ENCODE measurements at regions of chr22 and their contacts with region 1.

Region 1: GRCh38 chr22:42437488-42438292 is 5.5 kb upstream of the NFAM1 start:
- DNase-seq: peak; percentile 85
- H3K4me3 Mint-ChIP-seq: peak overlapping the region; percentile 72
- H3K27ac Mint-ChIP-seq: no peak overlapping the region
- H3K4me1 Mint-ChIP-seq: peaks cover 23% of the 10 kb centered on the region
- H3K27me3 Mint-ChIP-seq: peaks cover 19% of the 10 kb centered on the region
- CTCF ChIP-seq: peak; percentile 99

Region 2: DNA sequence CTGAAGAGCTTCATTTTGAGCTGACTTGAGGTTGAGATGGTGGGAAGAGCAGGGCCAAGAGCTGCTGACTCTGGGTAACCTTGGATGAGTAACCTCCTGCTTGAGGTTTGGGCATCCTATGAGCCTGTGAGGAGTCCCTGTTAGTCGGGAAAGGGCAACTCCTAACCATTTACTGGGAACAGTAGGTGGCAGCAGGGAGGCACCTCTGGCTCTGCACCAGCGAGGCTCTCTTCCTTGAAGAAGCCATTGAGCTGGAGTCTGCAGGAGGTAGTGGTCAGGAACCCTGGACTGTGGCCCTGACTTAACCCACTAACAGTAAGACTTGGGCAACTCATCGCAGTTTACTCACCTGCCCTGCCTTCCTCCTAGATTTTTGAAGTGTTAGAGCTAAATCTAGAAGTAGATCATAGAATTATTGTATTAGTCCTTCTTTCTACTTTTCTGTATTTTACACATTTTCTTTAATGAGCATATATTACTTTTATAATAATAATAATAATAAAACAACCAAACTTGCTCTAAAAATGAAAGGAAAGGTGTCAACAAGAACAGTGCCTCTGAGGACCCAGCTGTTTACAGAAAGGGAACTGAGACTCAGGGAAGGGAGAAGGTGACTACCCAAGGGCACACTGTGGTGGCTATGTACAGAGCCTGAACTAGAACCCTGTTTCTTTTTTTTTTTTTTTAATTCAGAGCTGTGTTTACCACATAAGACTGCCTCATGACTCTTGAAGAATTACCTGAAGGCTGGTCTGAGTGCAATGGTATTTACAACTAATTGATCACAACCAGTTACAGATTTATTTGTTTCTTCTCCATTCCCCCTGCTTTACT is 690.9 kb before region 1 on chr22:
- CTCF ChIA-PET with region 1: no interaction called
- intact Hi-C with region 1: no loop called
- DNase-seq: peak; percentile 84
- H3K4me3 Mint-ChIP-seq: no peak overlapping the region
- H3K27ac Mint-ChIP-seq: no peak overlapping the region
- H3K4me1 Mint-ChIP-seq: no peaks in the 10 kb centered on the region
- H3K27me3 Mint-ChIP-seq: peaks cover 65% of the 10 kb centered on the region
- CTCF ChIP-seq: peak; percentile 59

Region 3: GRCh38 chr22:41966607-41967240 is 471.0 kb before region 1 on chr22:
- CTCF ChIA-PET with region 1: interaction called, 3 read pairs
- intact Hi-C with region 1: loop called (anchors 5 kb)
- DNase-seq: peak; percentile 45
- H3K4me3 Mint-ChIP-seq: no peak overlapping the region
- H3K27ac Mint-ChIP-seq: no peak overlapping the region
- H3K4me1 Mint-ChIP-seq: peaks cover 7% of the 10 kb centered on the region
- H3K27me3 Mint-ChIP-seq: peaks cover 26% of the 10 kb centered on the region
- CTCF ChIP-seq: no peak

Region 4: GRCh38 chr22:42169055-42169469 is 268.6 kb before region 1 on chr22:
- CTCF ChIA-PET with region 1: interaction called, 4 read pairs
- intact Hi-C with region 1: loop called (anchors 2 kb)
- DNase-seq: peak; percentile 85
- H3K4me3 Mint-ChIP-seq: no peak overlapping the region
- H3K27ac Mint-ChIP-seq: no peak overlapping the region
- H3K4me1 Mint-ChIP-seq: peaks cover 20% of the 10 kb centered on the region
- H3K27me3 Mint-ChIP-seq: no peaks in the 10 kb centered on the region
- CTCF ChIP-seq: peak; percentile 97

Region 5: DNA sequence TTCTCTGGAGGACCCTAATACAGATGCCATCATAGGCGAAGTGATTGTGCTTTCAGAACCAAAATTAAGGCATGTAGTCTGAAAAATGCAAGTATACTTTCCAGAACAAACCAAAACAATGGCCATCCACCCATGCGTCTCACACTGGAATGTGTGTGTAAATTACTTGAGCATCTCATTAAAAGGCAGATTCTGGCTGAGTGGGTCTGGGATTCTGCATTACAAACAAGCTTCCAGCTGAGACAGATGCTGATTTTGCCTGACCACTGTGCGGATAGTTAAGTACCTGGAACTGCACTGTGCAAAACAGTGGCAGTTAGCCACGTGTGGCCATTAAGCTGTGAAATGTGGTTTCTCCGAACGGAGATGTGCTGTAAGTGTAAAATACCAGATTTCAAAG is 55.7 kb after region 1 on chr22:
- CTCF ChIA-PET with region 1: no interaction called
- intact Hi-C with region 1: no loop called
- DNase-seq: no peak
- H3K4me3 Mint-ChIP-seq: no peak overlapping the region
- H3K27ac Mint-ChIP-seq: no peak overlapping the region
- H3K4me1 Mint-ChIP-seq: peaks cover 14% of the 10 kb centered on the region
- H3K27me3 Mint-ChIP-seq: no peaks in the 10 kb centered on the region
- CTCF ChIP-seq: no peak